Thyroid gland (tissue), 4 donors: ENCODE measurements at regions of chr4 and their contacts with region 1.

Region 1: DNA sequence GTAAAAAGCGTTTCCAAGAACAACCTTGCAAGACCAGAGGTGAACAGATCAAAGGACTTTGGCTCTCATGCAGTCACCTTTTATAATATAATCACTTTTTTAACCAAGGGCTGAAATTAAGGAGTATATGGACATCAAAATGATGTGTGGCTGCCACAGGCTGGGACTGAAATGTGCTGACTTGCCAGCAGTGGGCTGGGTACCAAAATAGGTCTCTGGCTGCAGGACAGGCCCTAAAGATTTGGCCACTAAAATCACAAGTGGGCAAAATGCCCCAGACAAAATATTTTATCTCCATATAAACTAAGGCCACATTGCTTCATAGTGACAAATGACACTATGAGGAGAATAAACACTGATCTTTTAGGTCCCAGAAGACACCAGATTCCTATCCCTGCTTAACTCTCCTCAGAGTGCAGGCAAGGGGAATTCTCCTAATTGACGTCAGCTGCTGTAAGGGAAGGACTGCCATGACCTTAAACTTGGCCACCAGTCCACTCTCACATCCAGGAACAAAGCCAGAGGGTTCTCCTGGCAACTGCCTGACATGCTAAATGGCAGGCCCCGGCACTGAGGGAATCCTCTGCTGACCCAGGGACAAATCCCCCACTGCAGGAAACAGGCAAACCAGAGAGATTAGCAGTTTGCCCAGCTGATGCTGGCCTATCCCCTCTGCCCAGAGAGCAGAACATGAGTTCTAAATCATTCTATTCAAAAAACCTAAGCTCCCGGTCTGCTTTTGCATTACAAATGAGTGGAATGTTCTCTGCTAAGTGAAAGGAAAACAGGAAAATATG is 155.8 kb downstream of the PPP3CA start:
- DNase-seq: peak; percentile 67 to 73
- H3K4me3 ChIP-seq: no peak overlapping the region
- H3K27ac ChIP-seq: peak overlapping the region; percentile 53 to 81 (median 74)
- H3K4me1 ChIP-seq: peaks cover 6 to 18% of the 10 kb centered on the region in 2 donors
- H3K27me3 ChIP-seq: no peaks in the 10 kb centered on the region
- CTCF ChIP-seq: peak in 1 of 6 experiments; percentile 5
- POLR2A ChIP-seq: no peak

Region 2: DNA sequence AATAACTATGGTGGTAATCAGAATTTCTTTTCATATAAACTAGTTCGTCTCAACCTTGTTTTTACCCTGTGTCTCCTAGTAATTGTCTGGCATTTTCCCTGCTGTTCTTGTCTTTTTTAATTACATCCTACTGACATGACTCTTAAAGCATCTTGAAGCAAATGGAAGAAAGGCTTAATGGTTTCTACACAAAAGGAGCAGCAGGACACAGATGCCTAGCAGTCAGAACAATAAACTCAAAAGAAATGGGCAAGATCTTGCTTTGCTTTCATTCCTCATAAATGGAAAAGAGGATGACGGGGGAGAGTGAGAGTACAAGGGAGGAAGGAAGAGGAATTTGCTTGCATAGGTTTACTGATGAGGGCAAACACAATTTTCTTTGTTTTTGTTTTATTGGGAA is 380.5 kb before region 1 on chr4:
- intact Hi-C with region 1: no loop called
- DNase-seq: no peak
- H3K4me3 ChIP-seq: no peak overlapping the region
- H3K27ac ChIP-seq: no peak overlapping the region
- H3K4me1 ChIP-seq: no peaks in the 10 kb centered on the region
- H3K27me3 ChIP-seq: no peaks in the 10 kb centered on the region
- CTCF ChIP-seq: no peak
- POLR2A ChIP-seq: no peak

Region 3: GRCh38 chr4:101126059-101126458 is 65.4 kb before region 1 on chr4:
- intact Hi-C with region 1: no loop called
- DNase-seq: no peak
- H3K4me3 ChIP-seq: no peak overlapping the region
- H3K27ac ChIP-seq: no peak overlapping the region
- H3K4me1 ChIP-seq: peaks cover 0 to 6% of the 10 kb centered on the region in 2 donors
- H3K27me3 ChIP-seq: no peaks in the 10 kb centered on the region
- CTCF ChIP-seq: no peak
- POLR2A ChIP-seq: no peak

Region 4: GRCh38 chr4:101347557-101348366 is 156.3 kb after region 1 on chr4:
- intact Hi-C with region 1: loop called (anchors 10 kb)
- DNase-seq: peak; percentile 98 to 99
- H3K4me3 ChIP-seq: peak overlapping the region; percentile 45 to 88 (median 58)
- H3K27ac ChIP-seq: peak overlapping the region; percentile 84 to 98 (median 96)
- H3K4me1 ChIP-seq: peaks cover 4 to 21% of the 10 kb centered on the region in 2 donors
- H3K27me3 ChIP-seq: no peaks in the 10 kb centered on the region
- CTCF ChIP-seq: peak in 2 of 6 experiments; percentile 3 to 20
- POLR2A ChIP-seq: peak; percentile 70 to 96